ENCODE measurements at regions of chr21 and their contacts with region 1.

Region 1: GRCh38 chr21:41612674-41613532 is 104.9 kb upstream of the TMPRSS2 start:
- DNase-seq: no peak
- ATAC-seq: peak; percentile 85
- H3K4me3 ChIP-seq: peak overlapping the region in 1 of 2 experiments; percentile 20; a peak in 2 of 4 replicates
- H3K27ac ChIP-seq: peak overlapping the region; percentile 97
- H3K4me1 ChIP-seq: peaks cover 57% of the 10 kb centered on the region
- H3K27me3 ChIP-seq: no peaks in the 10 kb centered on the region
- CTCF ChIP-seq: peak; percentile 85

Region 2: DNA sequence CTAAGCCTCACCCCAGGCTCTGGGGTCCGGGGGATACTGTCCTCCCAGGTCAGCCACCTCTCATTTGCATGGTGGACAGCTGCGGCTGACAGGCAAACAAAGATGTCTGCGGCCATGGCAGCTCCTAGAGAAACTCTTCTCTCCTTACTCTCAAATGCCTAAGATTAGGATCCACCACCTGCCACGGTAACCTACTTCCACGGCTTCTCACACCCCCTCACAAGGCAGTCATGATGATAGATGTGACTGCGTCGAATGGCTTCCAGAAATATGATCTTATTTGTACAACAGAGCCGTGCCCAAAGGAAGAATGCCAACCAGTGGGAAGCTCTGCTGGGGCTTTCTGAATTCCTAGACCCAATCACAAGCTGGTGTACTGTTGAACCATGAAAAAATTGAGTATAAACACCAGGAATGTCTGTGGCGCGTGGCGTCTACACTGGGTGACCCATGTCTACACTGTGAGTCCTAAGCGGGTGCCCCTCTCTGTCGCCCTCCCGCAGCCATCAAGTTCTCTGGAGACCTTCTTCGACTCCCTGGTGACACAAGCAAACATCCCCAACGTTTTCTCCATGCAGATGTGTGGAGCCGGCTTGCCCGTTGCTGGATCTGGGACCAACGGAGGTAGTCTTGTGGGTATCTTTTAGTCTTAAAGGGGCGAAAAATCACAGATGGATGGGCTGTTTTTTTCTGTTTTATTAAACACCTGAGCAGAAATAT is 371.4 kb before region 1 on chr21:
- CTCF ChIA-PET with region 1: no interaction called
- POLR2A ChIA-PET with region 1: no interaction called
- in situ Hi-C with region 1: no loop called
- intact Hi-C with region 1: no loop called
- DNase-seq: no peak
- ATAC-seq: no peak
- H3K4me3 ChIP-seq: no peak overlapping the region
- H3K27ac ChIP-seq: no peak overlapping the region
- H3K4me1 ChIP-seq: no peaks in the 10 kb centered on the region
- H3K27me3 ChIP-seq: no peaks in the 10 kb centered on the region
- CTCF ChIP-seq: no peak

Region 3: GRCh38 chr21:41283211-41283818 is 329.6 kb before region 1 on chr21:
- CTCF ChIA-PET with region 1: interaction called, 8 read pairs
- POLR2A ChIA-PET with region 1: no interaction called
- in situ Hi-C with region 1: no loop called
- intact Hi-C with region 1: loop called (anchors 2 kb)
- DNase-seq: peak; percentile 54
- ATAC-seq: peak; percentile 98
- H3K4me3 ChIP-seq: no peak overlapping the region
- H3K27ac ChIP-seq: no peak overlapping the region
- H3K4me1 ChIP-seq: no peaks in the 10 kb centered on the region
- H3K27me3 ChIP-seq: peaks cover 3% of the 10 kb centered on the region; the same call in 1 of the 2 replicates
- CTCF ChIP-seq: peak; percentile 74

Region 4: DNA sequence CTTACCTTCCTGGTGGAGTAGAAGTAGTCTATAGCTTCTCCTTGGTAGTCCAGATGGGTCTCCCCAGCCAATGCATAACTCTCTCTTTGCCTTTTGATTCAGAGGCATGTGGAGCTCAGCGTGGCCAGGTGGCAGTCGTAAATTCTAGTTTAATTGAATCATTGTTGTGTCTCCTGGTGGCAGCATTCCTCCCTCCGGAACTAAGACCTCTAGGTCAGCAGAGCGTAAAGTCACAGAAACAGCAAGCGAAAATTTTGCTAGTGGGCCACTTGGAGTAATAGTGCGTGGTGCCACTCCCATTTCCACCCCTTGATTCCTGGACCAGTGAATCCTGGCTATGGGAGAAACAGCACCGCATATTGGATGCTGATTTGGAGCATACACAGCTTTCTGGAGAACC is 101.0 kb before region 1 on chr21:
- CTCF ChIA-PET with region 1: no interaction called
- POLR2A ChIA-PET with region 1: no interaction called
- in situ Hi-C with region 1: no loop called
- intact Hi-C with region 1: no loop called
- DNase-seq: no peak
- ATAC-seq: no peak
- H3K4me3 ChIP-seq: no peak overlapping the region
- H3K27ac ChIP-seq: peak overlapping the region; percentile 73
- H3K4me1 ChIP-seq: peaks cover 15% of the 10 kb centered on the region
- H3K27me3 ChIP-seq: no peaks in the 10 kb centered on the region
- CTCF ChIP-seq: no peak

Region 5: GRCh38 chr21:41731081-41731480 is 118.2 kb after region 1 on chr21:
- CTCF ChIA-PET with region 1: interaction called, 11 read pairs
- POLR2A ChIA-PET with region 1: interaction called, 4 read pairs
- in situ Hi-C with region 1: no loop called
- intact Hi-C with region 1: no loop called
- DNase-seq: no peak
- ATAC-seq: no peak
- H3K4me3 ChIP-seq: no peak overlapping the region
- H3K27ac ChIP-seq: peak overlapping the region; percentile 90
- H3K4me1 ChIP-seq: peaks cover 25% of the 10 kb centered on the region
- H3K27me3 ChIP-seq: no peaks in the 10 kb centered on the region
- CTCF ChIP-seq: no peak

Region 6: DNA sequence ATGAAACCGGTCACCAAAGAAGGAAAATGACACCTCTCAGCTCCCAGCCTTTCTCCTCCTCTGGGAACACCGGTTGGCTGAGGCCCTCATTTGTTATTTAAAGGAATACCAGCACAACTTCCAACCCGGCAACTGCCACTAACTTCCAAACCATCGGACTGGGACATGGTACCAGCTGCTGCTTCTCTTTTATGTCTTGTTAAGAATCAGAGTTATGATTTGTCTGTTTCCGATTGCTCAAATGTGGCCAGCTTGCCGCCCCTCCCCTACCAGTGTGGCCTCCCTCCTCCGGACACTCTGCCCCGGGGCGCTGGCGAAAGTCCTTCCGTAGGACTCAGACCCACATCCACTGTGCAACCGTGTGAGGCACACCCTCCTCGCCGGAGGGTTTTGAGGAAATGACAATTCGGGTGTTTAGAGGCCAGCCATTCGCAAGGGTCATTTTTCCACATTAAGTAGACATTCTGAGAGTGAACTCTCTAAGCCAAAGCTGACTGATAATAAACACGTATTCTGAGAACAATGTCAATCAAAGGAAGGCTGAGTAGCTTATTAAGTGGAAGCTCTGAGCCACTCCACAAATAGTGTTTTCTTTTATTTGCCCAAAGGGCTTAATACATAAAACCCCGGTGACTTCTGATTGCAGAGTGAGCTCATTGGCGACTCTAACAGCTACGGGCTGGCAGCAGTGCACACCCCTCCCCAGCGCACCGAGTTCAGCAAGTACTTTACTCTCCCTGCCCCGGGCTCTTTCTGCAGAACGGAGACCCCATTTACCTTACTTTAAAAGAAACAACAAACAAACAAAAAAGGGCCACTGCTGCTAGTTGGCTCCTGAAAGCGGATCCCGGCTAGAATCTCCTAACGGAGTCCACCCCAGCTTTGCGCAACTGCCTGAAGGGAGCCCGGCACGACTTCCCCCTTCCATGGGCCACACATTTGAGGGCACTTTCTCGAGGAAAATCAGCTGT is 148.6 kb after region 1 on chr21:
- CTCF ChIA-PET with region 1: interaction called, 8 read pairs
- POLR2A ChIA-PET with region 1: interaction called, 3 read pairs
- in situ Hi-C with region 1: loop called (anchors 25 kb)
- intact Hi-C with region 1: loop called (anchors 5 kb)
- DNase-seq: no peak
- ATAC-seq: peak; percentile 24
- H3K4me3 ChIP-seq: peak overlapping the region; percentile 72 to 91
- H3K27ac ChIP-seq: peak overlapping the region; percentile 98
- H3K4me1 ChIP-seq: peaks cover 34% of the 10 kb centered on the region
- H3K27me3 ChIP-seq: no peaks in the 10 kb centered on the region
- CTCF ChIP-seq: no peak

Region 7: DNA sequence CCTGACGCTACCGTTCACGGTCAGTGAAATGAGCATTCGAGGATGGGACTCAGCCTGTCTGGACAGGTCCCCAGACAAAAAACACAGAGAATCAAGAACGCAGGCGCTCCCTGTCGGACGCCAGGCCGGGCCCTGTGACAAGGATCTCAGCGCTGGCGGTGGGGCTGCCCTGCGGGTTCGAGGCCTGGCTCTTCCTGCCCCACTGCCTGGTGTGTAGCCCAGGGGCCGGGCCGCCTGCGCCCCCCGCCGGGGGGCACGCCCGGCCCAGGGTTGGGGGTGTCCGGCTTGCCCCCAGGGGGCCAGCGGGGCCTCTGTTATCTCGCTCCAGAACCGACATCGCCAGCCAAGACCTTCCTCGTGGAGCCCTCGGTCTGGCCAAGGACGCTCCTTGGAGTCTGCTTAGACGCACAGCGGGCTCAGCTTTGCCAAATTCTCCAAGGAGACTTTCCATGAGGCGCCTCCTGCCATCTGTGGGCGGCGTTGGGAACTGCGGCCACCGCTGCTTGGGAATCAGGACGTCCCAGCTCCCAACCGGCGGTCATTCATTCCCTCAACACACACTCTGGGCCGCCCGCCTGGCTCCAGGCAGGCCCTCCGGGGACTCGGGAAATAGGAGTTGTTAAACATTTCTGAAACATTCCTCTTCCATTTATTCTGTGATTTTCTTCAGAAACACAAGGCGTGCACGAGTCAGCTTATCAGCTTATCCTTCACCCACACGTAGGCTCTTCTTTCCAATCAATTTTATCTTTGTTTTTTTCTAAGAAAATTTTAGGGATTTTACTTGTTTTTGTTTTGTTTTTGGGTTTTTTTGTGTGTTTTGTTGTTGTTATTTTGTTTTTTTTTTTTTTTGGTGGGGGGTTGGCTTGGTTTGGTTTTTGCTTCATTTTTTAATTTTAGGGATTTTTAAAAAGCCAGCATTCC is 165.3 kb after region 1 on chr21:
- CTCF ChIA-PET with region 1: interaction called, 42 read pairs
- POLR2A ChIA-PET with region 1: interaction called, 5 read pairs
- in situ Hi-C with region 1: loop called (anchors 25 kb)
- intact Hi-C with region 1: loop called (anchors 1 kb)
- DNase-seq: no peak
- ATAC-seq: peak; percentile 85
- H3K4me3 ChIP-seq: no peak overlapping the region; a peak in 1 of 4 replicates
- H3K27ac ChIP-seq: peak overlapping the region; percentile 99
- H3K4me1 ChIP-seq: peaks cover 71% of the 10 kb centered on the region
- H3K27me3 ChIP-seq: no peaks in the 10 kb centered on the region
- CTCF ChIP-seq: peak; percentile 91

Region 8: DNA sequence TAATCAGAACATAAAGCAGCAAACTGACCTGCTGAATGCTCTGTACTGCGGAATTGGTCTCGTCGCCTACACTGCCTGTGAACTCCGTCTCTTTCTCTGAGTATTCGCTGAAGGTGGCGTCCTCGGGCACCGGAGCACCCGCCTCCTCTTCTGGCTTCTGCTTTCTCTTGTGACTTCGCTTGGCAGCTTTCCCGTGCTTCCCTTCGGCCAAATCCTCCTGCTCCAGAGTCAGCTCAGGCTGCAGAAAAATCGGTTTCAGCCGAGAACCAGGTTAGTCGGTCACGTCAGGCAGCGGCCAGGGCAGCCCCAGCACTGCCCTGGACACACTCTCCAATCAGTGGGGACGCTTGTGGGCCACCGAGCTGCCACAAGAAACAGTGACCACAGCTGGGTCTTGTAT is 189.8 kb after region 1 on chr21:
- CTCF ChIA-PET with region 1: no interaction called
- POLR2A ChIA-PET with region 1: no interaction called
- in situ Hi-C with region 1: no loop called
- intact Hi-C with region 1: no loop called
- DNase-seq: no peak
- ATAC-seq: no peak
- H3K4me3 ChIP-seq: no peak overlapping the region
- H3K27ac ChIP-seq: no peak overlapping the region
- H3K4me1 ChIP-seq: no peaks in the 10 kb centered on the region
- H3K27me3 ChIP-seq: no peaks in the 10 kb centered on the region
- CTCF ChIP-seq: no peak

Region 9: DNA sequence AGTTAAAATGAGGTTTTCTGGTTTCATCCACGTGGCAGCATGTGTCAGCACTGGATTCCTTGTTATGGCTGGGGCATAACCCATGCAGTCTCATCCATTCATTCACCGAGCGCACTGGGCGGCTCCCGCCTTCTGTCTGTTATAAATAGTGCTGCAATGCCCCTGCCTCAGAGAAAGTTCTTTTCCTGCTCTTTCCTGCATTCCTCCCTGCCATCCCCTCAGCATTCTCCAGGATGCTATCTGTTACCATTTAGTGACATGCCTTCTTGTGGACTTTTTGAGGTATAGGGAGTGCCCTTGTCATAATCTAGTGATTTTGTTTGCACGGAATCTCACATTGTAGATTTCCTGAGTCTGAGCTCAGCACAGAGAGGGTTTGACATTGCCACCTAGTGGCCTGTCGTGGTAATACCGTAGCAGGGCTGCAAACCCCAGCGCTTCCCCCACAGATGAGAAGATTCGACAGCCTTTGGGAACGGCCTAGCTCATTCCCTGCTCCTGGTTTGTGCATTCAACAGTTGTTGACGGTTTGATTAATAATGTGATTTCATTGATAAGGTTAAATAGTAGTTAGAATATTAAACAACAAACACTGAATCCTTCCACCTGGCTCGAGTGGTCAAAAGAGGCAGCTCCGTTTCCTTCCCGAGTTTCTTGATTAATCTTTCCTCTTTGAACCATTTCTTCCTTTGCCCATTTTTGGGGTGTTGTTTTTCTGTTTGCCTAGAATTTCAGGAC is 504.5 kb after region 1 on chr21:
- CTCF ChIA-PET with region 1: interaction called, 10 read pairs
- POLR2A ChIA-PET with region 1: no interaction called
- in situ Hi-C with region 1: no loop called
- intact Hi-C with region 1: no loop called
- DNase-seq: peak; percentile 57
- ATAC-seq: peak; percentile 90
- H3K4me3 ChIP-seq: no peak overlapping the region
- H3K27ac ChIP-seq: no peak overlapping the region
- H3K4me1 ChIP-seq: no peaks in the 10 kb centered on the region
- H3K27me3 ChIP-seq: no peaks in the 10 kb centered on the region
- CTCF ChIP-seq: peak; percentile 88

Measured in Panc1 (cell line).